ENCODE measurements at regions of chr1 and their contacts with region 1.

Region 1: GRCh38 chr1:8740034-8740449 is 77.4 kb downstream of the RERE start:
- DNase-seq: no peak
- ATAC-seq: no peak
- H3K4me3 Mint-ChIP-seq: no peak overlapping the region
- H3K27ac Mint-ChIP-seq: no peak overlapping the region
- H3K4me1 Mint-ChIP-seq: peaks cover 12% of the 10 kb centered on the region
- H3K27me3 Mint-ChIP-seq: no peaks in the 10 kb centered on the region

Region 2: DNA sequence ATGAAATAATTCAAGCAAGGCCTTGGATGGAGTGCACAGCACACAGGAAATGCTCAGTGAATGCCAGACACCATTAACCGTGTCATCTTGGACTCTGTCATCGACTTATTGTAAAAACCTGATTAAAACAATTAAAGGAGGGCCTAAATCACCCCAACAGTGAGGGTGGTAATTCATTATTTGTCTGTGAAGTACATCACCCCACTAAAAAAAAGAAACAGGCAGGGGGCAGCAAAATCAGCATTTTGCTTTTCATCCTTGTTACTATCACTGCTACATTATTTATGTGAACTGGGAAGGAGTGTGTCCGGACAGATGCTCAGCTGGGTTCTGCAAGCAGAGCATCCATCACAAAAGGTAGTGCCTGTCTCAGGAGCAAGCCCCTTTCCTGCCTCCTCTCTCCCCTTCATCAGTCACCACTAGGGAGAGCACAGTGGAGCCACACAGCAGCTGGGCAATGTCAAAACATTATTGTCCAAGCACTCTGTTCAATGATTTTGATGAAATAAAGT is 21.1 kb before region 1 on chr1:
- CTCF ChIA-PET with region 1: interaction called, 13 read pairs
- POLR2A ChIA-PET with region 1: interaction called, 3 read pairs
- intact Hi-C with region 1: no loop called
- DNase-seq: no peak
- ATAC-seq: no peak
- H3K4me3 Mint-ChIP-seq: no peak overlapping the region
- H3K27ac Mint-ChIP-seq: no peak overlapping the region
- H3K4me1 Mint-ChIP-seq: peaks cover 22% of the 10 kb centered on the region
- H3K27me3 Mint-ChIP-seq: no peaks in the 10 kb centered on the region

Region 3: GRCh38 chr1:8727809-8728213 is 12.2 kb before region 1 on chr1:
- CTCF ChIA-PET with region 1: interaction called, 13 read pairs
- POLR2A ChIA-PET with region 1: no interaction called
- intact Hi-C with region 1: no loop called
- DNase-seq: no peak
- ATAC-seq: no peak
- H3K4me3 Mint-ChIP-seq: no peak overlapping the region
- H3K27ac Mint-ChIP-seq: no peak overlapping the region
- H3K4me1 Mint-ChIP-seq: peaks cover 16% of the 10 kb centered on the region
- H3K27me3 Mint-ChIP-seq: no peaks in the 10 kb centered on the region

Region 4: GRCh38 chr1:8858888-8859706 is 119.1 kb after region 1 on chr1:
- CTCF ChIA-PET with region 1: no interaction called
- POLR2A ChIA-PET with region 1: no interaction called
- intact Hi-C with region 1: loop called in 1 of 2 experiments (anchors 10 kb)
- DNase-seq: peak; percentile 67
- ATAC-seq: peak; percentile 55
- H3K4me3 Mint-ChIP-seq: peak overlapping the region; percentile 15
- H3K27ac Mint-ChIP-seq: peak overlapping the region; percentile 71
- H3K4me1 Mint-ChIP-seq: peaks cover 31% of the 10 kb centered on the region
- H3K27me3 Mint-ChIP-seq: no peaks in the 10 kb centered on the region

Region 5: DNA sequence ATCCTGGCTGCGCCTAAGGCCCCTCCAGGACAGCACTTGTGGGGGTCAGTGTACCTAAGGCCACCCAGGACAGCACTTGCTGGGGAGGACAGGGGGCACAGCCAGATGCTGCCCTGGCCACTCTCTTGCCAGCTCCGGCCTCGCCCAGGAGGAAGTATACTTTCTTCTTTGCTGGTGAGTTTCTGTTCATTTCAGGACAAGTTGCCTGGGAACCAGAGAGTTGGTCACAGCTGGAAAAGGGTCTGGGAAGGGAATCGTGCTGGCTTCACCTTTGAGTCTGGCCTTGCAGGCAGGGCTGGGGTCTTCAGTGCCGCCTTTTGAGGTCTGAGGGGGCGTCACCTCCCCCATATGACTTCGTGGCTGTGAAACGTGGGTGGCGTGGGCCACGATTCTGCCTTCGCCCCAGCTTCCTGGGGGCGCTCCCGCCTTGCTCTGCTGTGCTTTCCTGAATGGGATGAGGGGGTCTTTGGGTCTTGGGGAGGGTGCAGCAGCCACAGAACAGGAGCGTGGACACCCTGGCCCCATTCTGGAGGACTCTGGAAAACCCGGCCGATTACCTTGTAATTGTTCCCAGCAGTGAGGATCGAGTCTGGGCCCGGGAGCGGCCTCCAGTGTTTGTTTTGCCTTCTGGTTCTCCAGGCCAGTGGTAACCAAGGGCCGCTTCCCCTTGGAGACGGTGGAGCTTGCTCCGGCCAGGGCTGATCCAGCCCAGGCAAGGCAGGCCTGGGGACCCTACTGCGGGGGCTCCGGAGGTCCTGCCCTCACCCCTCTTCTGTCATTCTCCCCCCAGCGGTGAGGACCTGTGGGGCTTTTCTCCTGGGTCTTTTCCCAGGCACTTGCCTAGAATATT is 598.6 kb after region 1 on chr1:
- CTCF ChIA-PET with region 1: no interaction called
- POLR2A ChIA-PET with region 1: no interaction called
- intact Hi-C with region 1: no loop called
- DNase-seq: no peak
- ATAC-seq: no peak
- H3K4me3 Mint-ChIP-seq: no peak overlapping the region
- H3K27ac Mint-ChIP-seq: no peak overlapping the region
- H3K4me1 Mint-ChIP-seq: no peaks in the 10 kb centered on the region
- H3K27me3 Mint-ChIP-seq: no peaks in the 10 kb centered on the region